Adrenal gland (tissue), 19 donors: ENCODE measurements at regions of chr19 and their contacts with region 1.

Region 1: DNA sequence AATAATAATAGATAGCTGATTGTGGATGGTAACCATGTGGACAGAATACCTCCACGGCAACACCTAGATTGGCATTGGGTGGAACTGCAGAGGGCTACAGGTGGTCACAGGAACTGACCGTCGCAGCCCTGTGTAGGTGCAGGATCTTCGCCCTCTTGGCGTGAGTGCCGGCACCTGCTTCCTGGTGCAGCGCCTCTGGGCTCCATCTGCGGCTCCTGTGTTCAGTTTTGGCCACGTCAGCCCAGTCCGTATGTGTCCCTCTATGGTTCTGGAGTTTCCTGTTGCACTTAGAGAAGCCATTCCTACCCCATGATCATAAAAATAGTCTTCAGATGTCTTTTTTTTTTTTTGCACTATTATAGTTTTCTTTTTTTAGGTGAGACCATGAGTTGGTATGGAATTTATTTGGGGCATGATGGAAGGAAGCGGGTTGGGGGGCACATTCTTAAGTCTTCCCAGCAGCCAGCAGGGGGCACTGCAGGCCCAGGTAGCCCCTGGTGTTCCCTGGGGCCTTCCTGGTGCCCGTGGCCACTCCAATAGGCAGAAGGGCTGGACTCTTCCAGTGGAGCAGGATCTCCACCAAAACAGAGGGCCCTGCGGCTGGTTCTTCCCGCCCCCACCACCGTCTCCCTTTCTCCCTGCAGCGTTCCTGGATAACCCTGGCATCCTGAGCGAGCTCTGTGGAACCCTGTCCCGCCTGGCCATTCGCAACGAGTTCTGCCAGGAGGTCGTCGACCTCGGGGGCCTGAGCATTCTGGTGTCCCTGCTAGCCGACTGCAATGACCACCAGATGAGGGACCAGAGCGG is 10.1 kb upstream of the SLC25A42 start:
- DNase-seq: peak; percentile 53 to 81 (median 71)
- H3K4me3 ChIP-seq: no peak overlapping the region
- H3K27ac ChIP-seq: no peak overlapping the region
- H3K4me1 ChIP-seq: no peaks in the 10 kb centered on the region
- H3K27me3 ChIP-seq: no peaks in the 10 kb centered on the region
- CTCF ChIP-seq: peak; percentile 58 to 84 (median 73)
- POLR2A ChIP-seq: no peak

Region 2: DNA sequence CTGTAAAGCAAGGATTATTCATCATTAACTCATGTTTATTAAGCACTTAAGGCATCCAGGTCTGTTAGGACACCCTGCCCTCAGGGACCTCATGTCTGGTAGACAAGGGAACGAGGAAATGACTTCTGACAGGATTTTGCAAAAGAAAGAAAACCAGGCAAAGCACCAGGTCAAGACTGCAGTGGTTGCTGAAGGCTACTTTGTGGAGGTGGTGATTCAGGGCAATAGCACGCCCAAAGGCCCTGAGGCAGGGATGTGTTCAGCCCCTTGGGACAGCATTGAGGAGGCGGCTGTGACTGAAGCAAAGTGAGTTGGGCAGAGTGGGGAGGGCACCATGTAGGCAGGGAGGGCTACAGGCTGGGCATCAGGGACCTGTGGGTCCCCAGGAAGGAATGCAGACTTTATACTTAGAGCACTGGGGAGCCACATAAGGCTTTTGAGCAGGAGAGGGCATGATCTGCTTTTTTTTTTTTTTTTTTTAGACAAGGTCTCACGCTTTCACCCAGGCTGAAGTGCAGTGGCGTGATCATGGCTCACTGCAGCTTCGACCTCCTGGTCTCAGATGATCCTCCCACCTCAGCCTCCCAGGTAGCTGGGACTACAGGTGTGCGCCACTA is 101.9 kb before region 1 on chr19:
- intact Hi-C with region 1: no loop called
- DNase-seq: no peak
- H3K4me3 ChIP-seq: no peak overlapping the region
- H3K27ac ChIP-seq: no peak overlapping the region
- H3K4me1 ChIP-seq: no peaks in the 10 kb centered on the region
- H3K27me3 ChIP-seq: no peaks in the 10 kb centered on the region
- CTCF ChIP-seq: no peak
- POLR2A ChIP-seq: no peak

Region 3: GRCh38 chr19:19098703-19099632 is 45.3 kb after region 1 on chr19:
- intact Hi-C with region 1: no loop called
- DNase-seq: peak in 3 of 7 donors; percentile 34 to 50 (median 35)
- H3K4me3 ChIP-seq: no peak overlapping the region
- H3K27ac ChIP-seq: no peak overlapping the region
- H3K4me1 ChIP-seq: no peaks in the 10 kb centered on the region
- H3K27me3 ChIP-seq: no peaks in the 10 kb centered on the region
- CTCF ChIP-seq: no peak
- POLR2A ChIP-seq: no peak

Region 4: GRCh38 chr19:19110410-19111135 is 56.9 kb after region 1 on chr19:
- intact Hi-C with region 1: loop called (anchors 5 to 10 kb)
- DNase-seq: peak in 1 of 7 donors; percentile 15
- H3K4me3 ChIP-seq: no peak overlapping the region
- H3K27ac ChIP-seq: no peak overlapping the region
- H3K4me1 ChIP-seq: peaks cover 7 to 10% of the 10 kb centered on the region in 2 donors
- H3K27me3 ChIP-seq: no peaks in the 10 kb centered on the region
- CTCF ChIP-seq: peak in 2 of 6 experiments; percentile 15 to 29
- POLR2A ChIP-seq: no peak

Region 5: DNA sequence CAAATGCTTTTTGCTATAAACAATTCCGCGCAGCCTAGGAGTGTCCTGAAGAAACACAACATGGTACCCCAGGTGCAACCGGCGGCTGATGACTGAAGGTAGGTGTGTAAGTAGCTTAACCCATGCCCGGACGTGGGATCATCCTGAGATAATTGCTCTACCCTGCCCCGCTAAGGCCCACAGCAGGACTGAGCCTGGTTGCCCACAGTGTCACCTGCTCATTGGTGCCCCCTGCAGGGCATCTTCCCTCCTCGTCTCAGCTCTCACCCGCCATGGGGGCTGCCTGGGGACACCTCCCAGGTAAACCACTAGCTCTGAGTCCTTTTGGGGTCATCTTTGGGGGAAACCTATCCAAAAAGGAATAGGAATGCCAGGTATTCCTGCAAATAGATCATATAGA is 62.2 kb after region 1 on chr19:
- intact Hi-C with region 1: loop called (anchors 5 to 10 kb)
- DNase-seq: peak in 5 of 7 donors; percentile 46 to 73 (median 71)
- H3K4me3 ChIP-seq: no peak overlapping the region
- H3K27ac ChIP-seq: no peak overlapping the region
- H3K4me1 ChIP-seq: no peaks in the 10 kb centered on the region
- H3K27me3 ChIP-seq: no peaks in the 10 kb centered on the region
- CTCF ChIP-seq: peak; percentile 17 to 59 (median 55)
- POLR2A ChIP-seq: no peak

Region 6: DNA sequence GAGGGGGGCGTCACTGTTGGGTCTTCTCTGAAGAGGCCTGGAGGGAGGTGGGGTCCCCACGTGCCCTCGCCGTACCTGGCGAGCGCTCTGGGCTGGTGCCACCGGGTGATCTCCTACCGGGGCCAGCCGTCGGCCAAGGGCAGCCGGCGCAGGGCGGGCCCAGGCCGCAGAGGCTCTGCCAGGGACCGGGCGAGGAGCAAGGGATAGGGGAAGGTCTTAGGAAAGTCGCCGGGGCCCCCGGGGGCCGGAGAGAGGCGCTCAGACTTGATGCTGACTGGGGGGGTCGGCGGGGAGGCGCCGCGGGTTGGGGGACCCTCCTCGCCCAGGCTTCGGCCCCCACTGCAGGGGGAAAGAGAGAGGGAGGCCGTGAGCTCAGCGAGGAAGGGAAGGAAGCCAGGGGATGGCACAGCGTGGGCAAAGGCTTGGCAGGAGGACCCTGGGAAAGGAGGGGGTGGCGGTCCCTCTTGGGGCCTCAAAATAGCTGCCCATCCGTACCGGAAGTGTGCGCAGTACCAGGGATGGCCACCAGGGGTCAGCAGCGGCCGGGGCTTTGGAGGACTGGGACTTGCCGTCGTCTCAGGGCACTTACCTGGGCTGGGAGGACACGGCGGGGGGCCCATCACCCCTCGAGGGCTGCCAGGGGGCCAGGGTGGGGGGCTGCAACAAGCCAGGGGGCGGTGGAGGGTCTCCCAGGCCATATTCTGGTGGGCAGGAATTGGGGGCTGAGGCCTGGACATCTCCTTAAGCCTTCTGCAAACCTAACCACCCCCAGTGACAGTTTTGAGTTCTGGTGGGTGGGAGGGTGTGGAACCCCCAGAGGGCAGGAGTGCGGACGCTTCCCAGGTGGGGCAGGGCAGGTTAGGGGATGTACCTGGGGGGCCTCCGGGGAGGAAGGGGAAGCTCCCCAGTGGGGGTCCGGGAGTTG is 92.2 kb after region 1 on chr19:
- intact Hi-C with region 1: loop called in 1 of 2 experiments (anchors 10 kb)
- DNase-seq: peak; percentile 66 to 90 (median 78)
- H3K4me3 ChIP-seq: no peak overlapping the region
- H3K27ac ChIP-seq: no peak overlapping the region
- H3K4me1 ChIP-seq: no peaks in the 10 kb centered on the region
- H3K27me3 ChIP-seq: no peaks in the 10 kb centered on the region
- CTCF ChIP-seq: peak; percentile 81 to 99 (median 92)
- POLR2A ChIP-seq: no peak